Naive thymus-derived CD4-positive, alpha-beta T cell (primary cell): ENCODE measurements at regions of chr1 and their contacts with region 1.

Region 1: GRCh38 chr1:89632657-89633247 is at the start of gene LRRC8C:
- DNase-seq: peak; percentile 86 to 96 (median 92)
- ATAC-seq: peak; percentile 89
- H3K4me3 ChIP-seq: peak within 1 kb of the TSS; percentile 74
- H3K4me3 Mint-ChIP-seq: peak within 1 kb of the TSS; percentile 92 to 99 (median 98)
- H3K27ac ChIP-seq: peak within 1 kb of the TSS; percentile 93
- H3K27ac Mint-ChIP-seq: peak within 1 kb of the TSS; percentile 93 to 99 (median 98)
- H3K4me1 ChIP-seq: peaks cover 53 to 65% of the 10 kb centered on the region in 2 donors
- H3K4me1 Mint-ChIP-seq: peaks cover 61 to 85% (median 81%) of the 10 kb centered on the region in 7 donors
- H3K27me3 ChIP-seq: no peaks in the 10 kb centered on the region
- H3K27me3 Mint-ChIP-seq: no peaks in the 10 kb centered on the region
- total RNA-seq, gene LRRC8C: 27.1 to 50.5 (median 46.6) TPM

Region 2: DNA sequence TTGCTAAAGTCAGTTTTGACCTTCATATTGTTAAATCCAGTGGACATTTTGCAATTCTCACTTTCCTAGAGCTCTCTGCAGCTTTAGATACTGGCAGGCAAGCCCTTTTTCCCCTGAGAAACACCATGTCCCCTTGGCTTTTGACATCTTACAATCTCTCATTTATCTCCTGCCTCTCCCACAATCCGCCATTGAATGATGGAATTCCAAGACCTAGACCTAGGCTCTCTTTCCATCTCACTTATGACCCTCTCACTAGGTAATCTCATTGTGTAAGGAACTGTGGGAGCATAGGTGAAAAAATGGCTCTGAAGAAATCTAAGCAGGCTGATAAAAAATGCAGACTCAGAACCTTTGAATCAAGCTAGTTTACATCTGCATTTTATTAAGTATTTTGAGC is 642.3 kb before region 1 on chr1:
- CTCF ChIA-PET with region 1: no interaction called
- POLR2A ChIA-PET with region 1: no interaction called
- intact Hi-C with region 1: loop called in 1 of 2 experiments (anchors 1 kb)
- DNase-seq: no peak
- ATAC-seq: no peak
- H3K4me3 ChIP-seq: no peak overlapping the region
- H3K4me3 Mint-ChIP-seq: peak overlapping the region in 4 of 10 donors; percentile 1 to 42 (median 23)
- H3K27ac ChIP-seq: no peak overlapping the region
- H3K27ac Mint-ChIP-seq: peak overlapping the region in 6 of 9 donors; percentile 61 to 90 (median 78)
- H3K4me1 ChIP-seq: peaks cover 15 to 28% of the 10 kb centered on the region in 2 donors
- H3K4me1 Mint-ChIP-seq: peaks cover 24 to 56% (median 45%) of the 10 kb centered on the region in 7 donors
- H3K27me3 ChIP-seq: no peaks in the 10 kb centered on the region
- H3K27me3 Mint-ChIP-seq: no peaks in the 10 kb centered on the region

Region 3: GRCh38 chr1:89598450-89599331 is 34.1 kb before region 1 on chr1:
- CTCF ChIA-PET with region 1: interaction called, 12 read pairs
- POLR2A ChIA-PET with region 1: interaction called, 834 read pairs
- intact Hi-C with region 1: loop called (anchors 1 to 5 kb)
- DNase-seq: peak in 5 of 9 donors; percentile 19 to 43 (median 35)
- ATAC-seq: peak; percentile 82
- H3K4me3 ChIP-seq: no peak overlapping the region
- H3K4me3 Mint-ChIP-seq: peak overlapping the region in 8 of 10 donors; percentile 1 to 67 (median 48)
- H3K27ac ChIP-seq: no peak overlapping the region
- H3K27ac Mint-ChIP-seq: peak overlapping the region; percentile 51 to 99 (median 79)
- H3K4me1 ChIP-seq: peaks cover 17 to 55% of the 10 kb centered on the region in 2 donors
- H3K4me1 Mint-ChIP-seq: peaks cover 42 to 98% (median 92%) of the 10 kb centered on the region in 7 donors
- H3K27me3 ChIP-seq: no peaks in the 10 kb centered on the region
- H3K27me3 Mint-ChIP-seq: no peaks in the 10 kb centered on the region

Region 4: GRCh38 chr1:89657886-89658285 is 25.1 kb after region 1 on chr1:
- CTCF ChIA-PET with region 1: interaction called, 5 read pairs
- POLR2A ChIA-PET with region 1: interaction called, 38 read pairs
- intact Hi-C with region 1: loop called in 1 of 2 experiments (anchors 1 kb)
- DNase-seq: peak in 7 of 9 donors; percentile 46 to 80 (median 68)
- ATAC-seq: peak; percentile 86
- H3K4me3 ChIP-seq: peak overlapping the region; percentile 18
- H3K4me3 Mint-ChIP-seq: peak overlapping the region; percentile 36 to 78 (median 66)
- H3K27ac ChIP-seq: peak overlapping the region; percentile 50
- H3K27ac Mint-ChIP-seq: peak overlapping the region; percentile 79 to 91 (median 84)
- H3K4me1 ChIP-seq: peaks cover 65 to 94% of the 10 kb centered on the region in 2 donors
- H3K4me1 Mint-ChIP-seq: peaks cover 47 to 94% (median 89%) of the 10 kb centered on the region in 7 donors
- H3K27me3 ChIP-seq: no peaks in the 10 kb centered on the region
- H3K27me3 Mint-ChIP-seq: no peaks in the 10 kb centered on the region

Region 5: GRCh38 chr1:89762779-89763648 is 130.3 kb after region 1 on chr1:
- CTCF ChIA-PET with region 1: interaction called, 122 read pairs
- POLR2A ChIA-PET with region 1: interaction called, 101 read pairs
- intact Hi-C with region 1: loop called (anchors 1 kb)
- DNase-seq: peak; percentile 76 to 88 (median 84)
- ATAC-seq: peak; percentile 100
- H3K4me3 ChIP-seq: peak overlapping the region; percentile 59
- H3K4me3 Mint-ChIP-seq: peak overlapping the region; percentile 76 to 96 (median 91)
- H3K27ac ChIP-seq: peak overlapping the region; percentile 50
- H3K27ac Mint-ChIP-seq: peak overlapping the region; percentile 76 to 95 (median 89)
- H3K4me1 ChIP-seq: peaks cover 18 to 37% of the 10 kb centered on the region in 2 donors
- H3K4me1 Mint-ChIP-seq: peaks cover 34 to 57% (median 55%) of the 10 kb centered on the region in 7 donors
- H3K27me3 ChIP-seq: no peaks in the 10 kb centered on the region
- H3K27me3 Mint-ChIP-seq: peaks cover 0 to 4% (median 0%) of the 10 kb centered on the region in 5 donors

Region 6: DNA sequence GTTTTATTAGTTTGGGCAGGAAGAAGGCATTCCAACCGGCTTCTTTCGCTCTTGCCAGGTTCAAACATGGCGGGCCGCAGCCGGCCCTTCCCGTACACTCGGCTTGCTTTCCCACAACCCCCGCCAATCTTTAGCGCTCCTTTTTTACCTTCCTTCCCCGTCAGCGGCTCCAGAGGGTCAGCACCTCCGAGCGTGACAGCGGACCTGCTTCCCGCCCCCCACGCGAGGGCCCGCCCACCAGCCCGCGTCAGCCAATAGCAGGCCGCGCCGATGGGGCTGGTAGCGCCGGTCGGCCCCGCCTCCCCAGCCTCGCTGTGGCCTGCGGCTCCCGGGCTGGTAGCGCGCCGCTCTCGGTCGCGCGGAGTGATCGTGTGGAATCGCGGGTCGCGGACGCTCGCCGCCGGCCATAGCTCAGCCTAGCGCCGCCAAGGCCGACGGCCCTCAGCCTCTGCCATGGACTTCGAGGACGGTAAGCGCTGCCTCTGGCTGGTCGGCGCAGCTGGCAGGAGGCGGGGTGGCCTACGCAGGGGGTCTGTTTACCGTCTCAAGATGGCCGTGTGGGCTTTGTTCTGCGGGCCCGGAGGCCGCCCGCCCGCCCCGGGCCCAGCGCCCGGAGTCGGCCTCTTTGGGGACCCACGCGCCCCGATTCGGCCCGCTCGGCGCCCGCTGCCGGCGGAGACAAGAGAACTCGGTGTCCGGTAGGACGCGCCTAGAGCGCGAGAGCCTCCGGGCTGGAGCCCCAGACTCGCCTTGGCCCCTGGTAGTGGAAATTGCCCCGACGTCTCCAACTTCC is 362.2 kb after region 1 on chr1 and contains the start of gene ZNF326:
- CTCF ChIA-PET with region 1: no interaction called
- POLR2A ChIA-PET with region 1: no interaction called
- intact Hi-C with region 1: loop called (anchors 2 kb)
- DNase-seq: peak; percentile 88 to 99 (median 93)
- ATAC-seq: peak; percentile 98
- H3K4me3 ChIP-seq: peak within 1 kb of the TSS; percentile 86
- H3K4me3 Mint-ChIP-seq: peak within 1 kb of the TSS; percentile 91 to 100 (median 99)
- H3K27ac ChIP-seq: peak within 1 kb of the TSS; percentile 85
- H3K27ac Mint-ChIP-seq: peak within 1 kb of the TSS; percentile 90 to 98 (median 96)
- H3K4me1 ChIP-seq: peaks cover 8 to 14% of the 10 kb centered on the region in 2 donors
- H3K4me1 Mint-ChIP-seq: peaks cover 28 to 47% (median 43%) of the 10 kb centered on the region in 7 donors
- H3K27me3 ChIP-seq: no peaks in the 10 kb centered on the region
- H3K27me3 Mint-ChIP-seq: peaks cover 0 to 7% (median 4%) of the 10 kb centered on the region in 5 donors
- total RNA-seq, gene ZNF326: 17.3 to 52.5 (median 23.5) TPM